ENCODE measurements at regions of chr20 and their contacts with region 1.

Region 1: GRCh38 chr20:49812463-49813304 is at the start of gene SLC9A8:
- H3K4me3 Mint-ChIP-seq: peak within 1 kb of the TSS; percentile 95
- H3K27ac Mint-ChIP-seq: peak within 1 kb of the TSS; percentile 99
- H3K4me1 Mint-ChIP-seq: peaks cover 33% of the 10 kb centered on the region
- H3K27me3 Mint-ChIP-seq: no peaks in the 10 kb centered on the region

Region 2: GRCh38 chr20:49676581-49677291 is 135.9 kb before region 1 on chr20:
- intact Hi-C with region 1: loop called (anchors 10 kb)
- H3K4me3 Mint-ChIP-seq: peak overlapping the region; percentile 42
- H3K27ac Mint-ChIP-seq: peak overlapping the region; percentile 88
- H3K4me1 Mint-ChIP-seq: peaks cover 89% of the 10 kb centered on the region
- H3K27me3 Mint-ChIP-seq: no peaks in the 10 kb centered on the region

Region 3: GRCh38 chr20:49713753-49714712 is 98.7 kb before region 1 on chr20 and contains the start of gene B4GALT5:
- intact Hi-C with region 1: loop called (anchors 5 kb)
- H3K4me3 Mint-ChIP-seq: peak within 1 kb of the TSS; percentile 85
- H3K27ac Mint-ChIP-seq: peak within 1 kb of the TSS; percentile 85
- H3K4me1 Mint-ChIP-seq: peaks cover 61% of the 10 kb centered on the region
- H3K27me3 Mint-ChIP-seq: no peaks in the 10 kb centered on the region

Region 4: GRCh38 chr20:49794336-49795138 is 18.1 kb before region 1 on chr20:
- intact Hi-C with region 1: loop called (anchors 2 kb)
- H3K4me3 Mint-ChIP-seq: no peak overlapping the region
- H3K27ac Mint-ChIP-seq: peak overlapping the region; percentile 72
- H3K4me1 Mint-ChIP-seq: peaks cover 58% of the 10 kb centered on the region
- H3K27me3 Mint-ChIP-seq: peaks cover 16% of the 10 kb centered on the region